Panc1 (cell line): ENCODE measurements at regions of chr19 and their contacts with region 1.

Region 1: GRCh38 chr19:37931881-37932655 is 25.1 kb downstream of the SIPA1L3 start:
- DNase-seq: peak; percentile 47
- ATAC-seq: peak; percentile 87
- H3K4me3 ChIP-seq: peak overlapping the region; percentile 53 to 74
- H3K27ac ChIP-seq: peak overlapping the region; percentile 96
- H3K4me1 ChIP-seq: peaks cover 35% of the 10 kb centered on the region
- H3K27me3 ChIP-seq: no peaks in the 10 kb centered on the region
- CTCF ChIP-seq: no peak

Region 2: GRCh38 chr19:38057959-38058710 is 126.1 kb after region 1 on chr19:
- CTCF ChIA-PET with region 1: interaction called, 3 read pairs
- POLR2A ChIA-PET with region 1: interaction called, 17 read pairs
- in situ Hi-C with region 1: no loop called
- intact Hi-C with region 1: no loop called
- DNase-seq: no peak
- ATAC-seq: peak; percentile 75
- H3K4me3 ChIP-seq: peak overlapping the region in 1 of 2 experiments; percentile 6; a peak in 2 of 4 replicates
- H3K27ac ChIP-seq: peak overlapping the region; percentile 62
- H3K4me1 ChIP-seq: peaks cover 11% of the 10 kb centered on the region
- H3K27me3 ChIP-seq: no peaks in the 10 kb centered on the region
- CTCF ChIP-seq: no peak